ENCODE measurements at regions of chr12 and their contacts with region 1.

Region 1: DNA sequence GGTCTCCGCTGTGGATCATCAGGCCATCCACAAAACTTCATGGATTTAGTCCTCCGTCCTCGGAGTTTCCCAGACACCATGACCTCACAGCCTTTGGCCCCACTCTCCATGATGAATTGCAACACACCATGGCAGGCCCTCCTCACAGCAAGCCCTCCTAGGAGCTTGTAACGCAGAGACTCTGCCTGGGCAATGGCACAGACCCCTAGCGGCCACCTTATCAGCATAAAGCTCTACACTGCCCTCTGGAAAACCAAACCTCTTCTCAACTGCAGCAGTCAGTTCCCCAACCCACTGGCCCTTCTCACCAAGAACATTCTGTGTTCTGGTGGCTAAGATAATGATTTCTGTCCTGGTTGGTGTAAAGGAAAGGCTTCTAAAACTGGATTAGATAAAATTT is 238.4 kb upstream of the USP15 start:
- DNase-seq: no peak
- H3K4me3 ChIP-seq: no peak overlapping the region
- H3K27ac ChIP-seq: no peak overlapping the region
- H3K4me1 ChIP-seq: no peaks in the 10 kb centered on the region
- H3K27me3 ChIP-seq: no peaks in the 10 kb centered on the region
- CTCF ChIP-seq: no peak
- POLR2A ChIP-seq: no peak

Region 2: DNA sequence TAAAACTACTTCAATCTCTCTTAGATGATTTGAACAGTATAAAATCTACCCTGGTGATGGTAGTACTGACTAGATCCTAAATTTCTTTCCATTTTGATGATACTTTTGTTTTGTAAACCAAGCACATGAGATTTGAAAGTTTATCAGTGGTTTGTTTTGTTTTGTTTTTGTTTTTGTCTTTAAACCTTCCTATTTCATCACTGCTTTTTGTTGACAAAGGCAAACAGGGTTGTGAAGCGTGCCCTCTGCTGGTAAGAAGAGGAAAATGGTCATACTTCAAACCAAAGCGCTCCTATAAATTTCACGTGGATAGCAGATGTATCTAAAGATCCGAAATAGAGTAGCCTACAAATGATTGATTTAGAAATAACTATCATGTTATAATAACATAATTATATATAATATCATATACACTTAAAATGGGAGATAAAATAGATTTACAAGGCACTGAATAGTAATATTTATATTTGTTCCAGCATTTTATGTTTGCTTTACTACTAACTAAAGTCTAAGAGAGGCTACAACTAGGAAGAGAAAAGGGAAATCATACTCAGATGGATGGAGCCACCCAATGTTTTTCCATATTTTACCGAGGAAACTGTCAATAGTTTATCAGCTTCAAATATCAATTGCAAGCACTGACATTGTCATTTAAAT is 15.6 kb before region 1 on chr12:
- intact Hi-C with region 1: loop called (anchors 1 kb)
- DNase-seq: no peak
- H3K4me3 ChIP-seq: no peak overlapping the region
- H3K27ac ChIP-seq: no peak overlapping the region
- H3K4me1 ChIP-seq: no peaks in the 10 kb centered on the region
- H3K27me3 ChIP-seq: no peaks in the 10 kb centered on the region
- CTCF ChIP-seq: peak; percentile 24 to 32 (median 26)
- POLR2A ChIP-seq: no peak

Region 3: DNA sequence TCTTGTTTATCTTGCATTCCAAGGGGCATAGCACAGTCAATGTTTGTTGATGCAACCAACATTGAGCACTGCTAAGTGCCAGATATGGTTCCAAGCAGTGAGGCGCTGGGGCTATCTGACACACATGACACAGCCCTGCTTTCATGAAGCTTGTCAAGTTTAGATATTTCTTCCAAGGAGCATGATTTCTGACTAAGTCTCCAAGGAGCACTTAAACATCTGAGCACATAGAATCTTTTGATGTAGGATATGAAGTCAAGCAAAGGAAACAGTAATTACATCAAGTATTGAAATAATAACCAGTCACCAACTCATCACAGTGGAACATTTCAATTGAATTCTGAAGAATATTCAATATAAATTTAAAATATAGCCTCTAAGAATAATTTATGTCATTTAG is 60.6 kb after region 1 on chr12:
- intact Hi-C with region 1: no loop called
- DNase-seq: no peak
- H3K4me3 ChIP-seq: no peak overlapping the region
- H3K27ac ChIP-seq: no peak overlapping the region
- H3K4me1 ChIP-seq: no peaks in the 10 kb centered on the region
- H3K27me3 ChIP-seq: no peaks in the 10 kb centered on the region
- CTCF ChIP-seq: no peak
- POLR2A ChIP-seq: no peak

Measured in breast epithelium (tissue), 4 donors.